ENCODE measurements at regions of chr17 and their contacts with region 1.

Region 1: GRCh38 chr17:30824356-30825145 is at the start of gene CRLF3:
- DNase-seq: peak; percentile 94
- H3K4me3 Mint-ChIP-seq: peak within 1 kb of the TSS; percentile 91
- H3K27ac Mint-ChIP-seq: peak within 1 kb of the TSS; percentile 86
- H3K4me1 Mint-ChIP-seq: peaks cover 38% of the 10 kb centered on the region
- H3K27me3 Mint-ChIP-seq: no peaks in the 10 kb centered on the region
- total RNA-seq, gene CRLF3: 48.1 to 48.5 TPM

Region 2: GRCh38 chr17:30363715-30364202 is 460.8 kb before region 1 on chr17:
- CTCF ChIA-PET with region 1: no interaction called
- POLR2A ChIA-PET with region 1: no interaction called
- intact Hi-C with region 1: loop called (anchors 5 kb)
- DNase-seq: peak; percentile 94
- H3K4me3 Mint-ChIP-seq: peak overlapping the region; percentile 13
- H3K27ac Mint-ChIP-seq: peak overlapping the region; percentile 78
- H3K4me1 Mint-ChIP-seq: peaks cover 28% of the 10 kb centered on the region
- H3K27me3 Mint-ChIP-seq: no peaks in the 10 kb centered on the region

Region 3: DNA sequence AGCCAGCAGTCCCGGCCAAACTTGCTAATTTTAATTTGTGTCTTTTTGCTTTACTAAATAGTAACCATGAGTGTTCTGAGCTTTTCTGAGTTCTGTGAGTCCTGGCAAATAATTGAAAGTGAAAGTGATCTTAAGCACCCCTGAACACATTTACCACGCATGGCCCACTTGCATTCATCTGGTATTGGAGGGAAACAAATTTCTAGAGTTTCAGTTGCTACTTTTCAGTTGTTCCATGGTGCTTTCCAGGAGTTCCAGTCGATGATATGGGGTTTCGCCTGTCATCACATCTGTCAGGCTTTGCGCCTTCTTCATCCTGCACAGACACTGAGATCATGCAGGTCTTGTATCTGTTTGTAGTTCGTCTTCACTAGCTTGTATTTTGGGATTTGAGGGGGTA is 44.2 kb before region 1 on chr17:
- CTCF ChIA-PET with region 1: interaction called, 6 read pairs
- POLR2A ChIA-PET with region 1: interaction called, 11 read pairs
- intact Hi-C with region 1: no loop called
- DNase-seq: peak; percentile 55
- H3K4me3 Mint-ChIP-seq: peak overlapping the region; percentile 38
- H3K27ac Mint-ChIP-seq: peak overlapping the region; percentile 88
- H3K4me1 Mint-ChIP-seq: peaks cover 18% of the 10 kb centered on the region
- H3K27me3 Mint-ChIP-seq: no peaks in the 10 kb centered on the region

Region 4: DNA sequence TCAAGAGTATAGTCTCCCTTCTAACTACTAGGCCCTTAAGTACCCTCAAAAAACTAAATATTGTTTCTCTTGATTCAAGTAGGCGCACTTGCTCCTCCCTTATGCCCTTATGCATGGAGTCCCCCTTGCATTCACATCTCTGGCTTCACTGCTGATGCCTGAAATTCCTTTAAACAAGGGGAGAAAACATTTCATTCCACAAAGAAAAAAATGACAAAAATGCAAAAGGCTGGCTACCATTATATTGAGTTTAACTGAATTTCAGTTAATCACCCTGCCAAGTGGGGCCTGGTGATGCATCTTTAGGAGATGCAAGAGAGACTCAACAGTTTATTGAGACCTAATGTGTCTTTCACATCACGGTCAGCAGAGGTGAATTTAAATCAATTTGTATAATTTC is 35.6 kb before region 1 on chr17:
- CTCF ChIA-PET with region 1: interaction called, 11 read pairs
- POLR2A ChIA-PET with region 1: interaction called, 11 read pairs
- intact Hi-C with region 1: no loop called
- DNase-seq: no peak
- H3K4me3 Mint-ChIP-seq: no peak overlapping the region
- H3K27ac Mint-ChIP-seq: peak overlapping the region; percentile 57
- H3K4me1 Mint-ChIP-seq: peaks cover 18% of the 10 kb centered on the region
- H3K27me3 Mint-ChIP-seq: no peaks in the 10 kb centered on the region

Region 5: GRCh38 chr17:30796016-30796415 is 28.5 kb before region 1 on chr17:
- CTCF ChIA-PET with region 1: interaction called, 25 read pairs
- POLR2A ChIA-PET with region 1: interaction called, 5 read pairs
- intact Hi-C with region 1: loop called (anchors 1 kb)
- DNase-seq: no peak
- H3K4me3 Mint-ChIP-seq: no peak overlapping the region
- H3K27ac Mint-ChIP-seq: peak overlapping the region; percentile 82
- H3K4me1 Mint-ChIP-seq: peaks cover 17% of the 10 kb centered on the region
- H3K27me3 Mint-ChIP-seq: no peaks in the 10 kb centered on the region

Region 6: DNA sequence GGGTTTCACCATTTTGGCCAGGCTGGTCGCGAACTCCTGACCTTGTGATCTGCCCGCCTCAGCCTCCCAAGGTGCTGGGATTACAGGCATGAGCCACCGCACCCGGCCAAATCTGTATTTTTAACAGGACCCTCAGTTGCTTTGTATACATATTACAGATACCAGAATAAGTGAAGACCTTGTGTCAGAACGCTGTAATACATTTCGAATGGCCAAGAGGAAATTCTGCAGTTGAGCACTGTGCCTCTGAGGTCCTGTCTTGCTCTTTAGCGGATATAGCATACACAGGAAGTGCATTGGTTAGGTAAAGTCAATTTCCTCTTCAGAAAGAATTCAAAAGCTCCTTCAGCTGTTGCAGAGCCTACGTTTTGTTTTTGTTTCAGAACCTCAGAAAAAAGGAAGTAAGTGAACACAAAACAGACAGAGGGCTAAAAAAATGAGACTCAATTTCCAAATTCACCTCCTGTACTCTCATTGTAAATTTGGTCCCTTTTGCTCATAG is 15.7 kb before region 1 on chr17:
- CTCF ChIA-PET with region 1: interaction called, 104 read pairs
- POLR2A ChIA-PET with region 1: interaction called, 23 read pairs
- intact Hi-C with region 1: loop called (anchors 1 kb)
- DNase-seq: peak; percentile 45
- H3K4me3 Mint-ChIP-seq: peak overlapping the region; percentile 79
- H3K27ac Mint-ChIP-seq: peak overlapping the region; percentile 94
- H3K4me1 Mint-ChIP-seq: peaks cover 65% of the 10 kb centered on the region
- H3K27me3 Mint-ChIP-seq: no peaks in the 10 kb centered on the region

Region 7: GRCh38 chr17:30840771-30841170 is 16.2 kb after region 1 on chr17:
- CTCF ChIA-PET with region 1: no interaction called
- POLR2A ChIA-PET with region 1: no interaction called
- intact Hi-C with region 1: no loop called
- DNase-seq: no peak
- H3K4me3 Mint-ChIP-seq: no peak overlapping the region
- H3K27ac Mint-ChIP-seq: no peak overlapping the region
- H3K4me1 Mint-ChIP-seq: no peaks in the 10 kb centered on the region
- H3K27me3 Mint-ChIP-seq: no peaks in the 10 kb centered on the region

Region 8: GRCh38 chr17:31321481-31321880 is 496.9 kb after region 1 on chr17 and contains the start of gene EVI2A:
- CTCF ChIA-PET with region 1: no interaction called
- POLR2A ChIA-PET with region 1: no interaction called
- intact Hi-C with region 1: loop called (anchors 5 kb)
- DNase-seq: peak; percentile 87
- H3K4me3 Mint-ChIP-seq: peak within 1 kb of the TSS; percentile 75
- H3K27ac Mint-ChIP-seq: peak within 1 kb of the TSS; percentile 92
- H3K4me1 Mint-ChIP-seq: peaks cover 35% of the 10 kb centered on the region
- H3K27me3 Mint-ChIP-seq: no peaks in the 10 kb centered on the region
- total RNA-seq, gene EVI2A: 24.5 to 25.5 TPM

Measured in activated CD4-positive, alpha-beta memory T cell treated with anti-CD3 and anti-CD28 coated beads for 36 hours (primary cell).